Activated CD4-positive, alpha-beta memory T cell treated with anti-CD3 and anti-CD28 coated beads, Interleukin-2, amount 10 ng/mL, durations not matched to agents 7 days and 5 days (primary cell): ENCODE measurements at regions of chr16 and their contacts with region 1.

Region 1: DNA sequence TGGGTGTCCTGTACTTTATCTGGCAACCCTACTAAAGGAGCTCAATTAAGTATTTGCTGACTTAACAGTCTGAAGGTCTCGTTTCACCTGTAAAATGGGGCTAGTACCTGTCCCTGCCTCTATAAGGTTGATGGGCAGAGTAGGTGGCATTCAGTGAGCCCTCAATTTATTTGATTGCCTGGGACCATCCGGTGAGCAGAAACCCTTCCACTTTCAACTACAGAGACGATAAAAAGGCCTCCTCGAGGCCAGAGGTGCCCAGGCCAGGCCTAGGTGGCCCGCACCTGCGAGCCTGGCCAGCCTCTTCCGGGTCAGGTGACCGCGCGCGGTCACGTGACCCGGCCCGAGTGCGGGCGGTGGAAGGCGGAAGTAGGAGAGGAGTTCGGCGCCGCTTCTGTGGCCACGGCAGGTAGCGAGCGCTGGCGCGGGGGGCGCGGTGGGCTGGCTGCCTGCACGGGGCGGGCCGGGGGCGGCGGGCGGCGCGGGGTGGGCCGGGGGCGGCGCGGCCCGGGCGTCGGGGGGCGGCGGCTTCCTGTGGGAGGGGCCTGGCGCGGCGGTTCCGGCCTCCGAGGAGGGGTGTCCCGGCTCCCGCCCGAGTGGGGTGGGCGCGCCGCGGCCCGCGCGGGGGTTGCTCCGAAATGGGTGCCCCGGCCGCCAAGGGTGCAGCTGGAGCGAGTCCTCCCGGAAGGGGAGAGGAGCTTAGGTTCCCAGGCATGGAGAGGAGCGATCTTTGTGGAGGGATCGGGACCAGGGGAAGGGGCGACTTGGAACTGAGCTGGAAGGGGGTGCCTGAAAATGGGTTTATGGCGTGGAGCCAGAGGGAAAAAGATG is at the start of gene WWP2:
- DNase-seq: peak; percentile 81
- H3K4me3 Mint-ChIP-seq: peak within 1 kb of the TSS; percentile 92
- H3K27ac Mint-ChIP-seq: peak within 1 kb of the TSS; percentile 90
- H3K4me1 Mint-ChIP-seq: peaks cover 29% of the 10 kb centered on the region
- H3K27me3 Mint-ChIP-seq: no peaks in the 10 kb centered on the region
- total RNA-seq, gene WWP2: 59.4 to 61.6 TPM

Region 2: DNA sequence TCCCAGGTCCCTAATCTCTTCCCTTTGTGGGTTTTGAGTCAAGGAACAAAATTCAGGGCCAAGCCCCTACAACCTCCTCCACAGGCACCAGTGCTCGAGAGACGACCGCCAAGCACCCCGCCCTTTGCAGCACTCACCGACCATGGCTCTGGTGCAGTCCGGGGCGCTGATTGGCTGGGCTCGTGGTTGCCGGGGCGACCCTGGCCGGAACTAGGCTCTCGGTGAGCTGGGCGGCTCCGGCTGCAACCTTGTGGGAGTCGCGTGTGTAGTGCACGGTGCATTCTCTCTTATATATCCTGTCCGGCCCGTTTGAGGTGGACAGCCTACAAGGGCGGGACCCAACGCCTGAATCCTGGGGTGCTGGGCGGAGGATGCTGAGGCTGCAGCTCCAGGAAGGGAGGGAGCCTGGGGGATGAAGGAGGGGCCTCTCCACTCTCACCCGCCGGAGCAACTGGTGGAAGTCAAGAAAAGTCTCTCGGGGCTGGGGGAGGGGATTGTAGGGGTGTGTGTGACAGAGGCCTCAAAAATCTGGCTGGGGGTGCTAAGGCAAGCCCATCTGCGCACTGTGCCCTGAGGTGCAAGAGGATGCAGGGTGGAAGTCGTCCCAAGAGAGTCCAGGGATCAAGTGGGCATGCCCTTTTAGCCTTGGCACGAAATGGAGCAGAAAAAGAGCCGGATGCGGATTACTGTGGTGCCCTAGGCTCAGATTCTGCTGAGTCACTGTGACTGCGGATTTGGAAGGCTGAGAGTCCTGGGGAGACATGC is 35.7 kb before region 1 on chr16 and contains the start of gene NQO1:
- CTCF ChIA-PET with region 1: interaction called, 5 read pairs
- POLR2A ChIA-PET with region 1: interaction called, 47 read pairs
- DNase-seq: peak; percentile 95
- H3K4me3 Mint-ChIP-seq: peak within 1 kb of the TSS; percentile 89
- H3K27ac Mint-ChIP-seq: peak within 1 kb of the TSS; percentile 90
- H3K4me1 Mint-ChIP-seq: peaks cover 59% of the 10 kb centered on the region
- H3K27me3 Mint-ChIP-seq: no peaks in the 10 kb centered on the region
- total RNA-seq, gene NQO1: 31.2 to 35.6 TPM

Region 3: DNA sequence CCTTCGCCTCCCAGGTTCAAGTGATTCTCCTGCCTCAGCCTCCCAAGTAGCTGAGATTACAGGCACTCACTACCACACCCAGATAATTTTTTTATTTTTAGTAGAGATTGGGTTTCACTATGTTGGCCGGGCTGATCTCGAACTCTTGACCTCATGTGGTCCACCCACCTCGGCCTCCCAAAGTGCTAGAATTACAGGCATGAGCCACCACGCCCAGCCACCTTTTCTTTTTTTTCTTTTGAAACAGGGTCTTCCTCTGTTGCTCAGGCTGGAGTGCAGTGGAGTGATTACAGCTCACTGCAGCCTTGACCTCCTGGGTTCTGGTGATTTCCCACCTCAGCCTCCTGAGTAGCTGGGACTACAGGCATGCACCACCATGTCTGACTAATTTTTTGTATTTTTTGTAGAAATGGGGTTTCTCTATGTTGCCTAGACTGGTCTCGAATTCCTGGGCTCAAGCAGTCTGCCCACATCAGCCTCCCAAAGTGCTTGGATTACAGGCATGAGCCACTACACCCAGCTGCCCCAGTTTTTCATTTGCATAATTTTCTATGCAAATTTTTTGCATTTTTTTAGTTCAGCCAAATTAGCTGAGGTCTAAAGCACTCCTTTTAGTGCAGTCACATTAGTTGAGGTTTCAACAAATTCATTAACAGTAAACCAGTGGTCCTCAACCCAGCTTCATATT is 11.2 kb after region 1 on chr16:
- CTCF ChIA-PET with region 1: no interaction called
- POLR2A ChIA-PET with region 1: interaction called, 16 read pairs
- DNase-seq: no peak
- H3K4me3 Mint-ChIP-seq: no peak overlapping the region
- H3K27ac Mint-ChIP-seq: no peak overlapping the region
- H3K4me1 Mint-ChIP-seq: peaks cover 38% of the 10 kb centered on the region
- H3K27me3 Mint-ChIP-seq: no peaks in the 10 kb centered on the region

Region 4: GRCh38 chr16:69917739-69918138 is 155.5 kb after region 1 on chr16:
- CTCF ChIA-PET with region 1: no interaction called
- POLR2A ChIA-PET with region 1: no interaction called
- DNase-seq: no peak
- H3K4me3 Mint-ChIP-seq: no peak overlapping the region
- H3K27ac Mint-ChIP-seq: no peak overlapping the region
- H3K4me1 Mint-ChIP-seq: no peaks in the 10 kb centered on the region
- H3K27me3 Mint-ChIP-seq: no peaks in the 10 kb centered on the region